Posterior cingulate gyrus (tissue), 11 donors: ENCODE measurements at regions of chr5 and their contacts with region 1.

Region 1: GRCh38 chr5:114361724-114362196 is at the start of gene KCNN2:
- DNase-seq: peak; percentile 78 to 99 (median 91)

Region 2: DNA sequence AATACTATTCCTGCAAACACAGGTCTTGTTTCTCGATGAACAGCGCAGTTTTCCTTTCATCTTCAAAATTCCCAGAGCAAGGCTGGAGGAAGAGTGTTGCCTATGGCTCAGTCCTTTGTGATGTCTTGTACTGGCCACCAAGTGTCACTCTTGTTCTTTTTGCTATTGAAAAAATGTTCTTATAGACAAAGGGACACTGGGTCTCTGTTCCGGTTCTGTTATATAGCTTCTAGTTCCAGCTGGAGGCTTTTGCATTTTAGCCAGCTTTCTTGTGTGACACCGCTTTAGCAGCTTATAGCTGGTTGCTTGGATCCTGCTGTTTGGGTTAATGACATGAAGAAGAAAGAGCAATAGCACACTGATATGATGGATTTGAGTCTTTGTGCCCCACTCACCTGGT is 343.6 kb before region 1 on chr5:
- intact Hi-C with region 1: loop called (anchors 2 kb)
- DNase-seq: peak in 1 of 10 donors; percentile 3

Region 3: GRCh38 chr5:114237766-114238165 is 124.0 kb before region 1 on chr5:
- intact Hi-C with region 1: no loop called
- DNase-seq: no peak